Heart right ventricle (tissue), 16 donors: ENCODE measurements at regions of chr3 and their contacts with region 1.

Region 1: GRCh38 chr3:59750391-59750790 is 700.6 kb upstream of the CFAP20DC start:
- DNase-seq: no peak
- ATAC-seq: no peak
- H3K4me3 ChIP-seq: no peak overlapping the region
- H3K27ac ChIP-seq: no peak overlapping the region
- H3K4me1 ChIP-seq: peaks cover 0 to 3% (median 0%) of the 10 kb centered on the region in 9 donors
- H3K27me3 ChIP-seq: no peaks in the 10 kb centered on the region
- CTCF ChIP-seq: no peak

Region 2: DNA sequence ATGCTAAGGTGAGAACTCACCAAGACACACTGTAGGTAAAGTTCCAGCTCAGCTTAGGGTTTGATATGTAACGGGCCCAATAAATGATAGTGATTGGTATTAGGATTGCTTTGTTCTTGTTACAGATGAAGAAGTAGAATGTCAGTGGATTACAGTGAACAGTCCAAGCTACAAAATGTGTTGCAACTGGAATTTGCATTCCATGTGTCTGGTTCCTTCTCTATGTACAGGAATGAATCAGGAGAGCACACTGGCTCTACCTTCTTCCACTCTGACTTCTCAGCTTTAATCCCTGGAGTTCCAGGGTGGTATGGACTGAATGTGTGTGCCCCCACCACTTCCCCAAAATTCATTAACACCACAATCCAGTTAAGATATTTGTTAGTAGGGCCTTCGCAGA is 29.8 kb after region 1 on chr3:
- intact Hi-C with region 1: loop called in 1 of 10 experiments (anchors 2 kb)
- DNase-seq: no peak
- ATAC-seq: no peak
- H3K4me3 ChIP-seq: no peak overlapping the region
- H3K27ac ChIP-seq: no peak overlapping the region
- H3K4me1 ChIP-seq: no peaks in the 10 kb centered on the region
- H3K27me3 ChIP-seq: no peaks in the 10 kb centered on the region
- CTCF ChIP-seq: no peak